ENCODE measurements at regions of chr6 and their contacts with region 1.

Region 1: GRCh38 chr6:150876598-150876997 is 11.1 kb downstream of the MTHFD1L start:
- DNase-seq: no peak
- H3K4me3 Mint-ChIP-seq: no peak overlapping the region
- H3K27ac Mint-ChIP-seq: no peak overlapping the region
- H3K4me1 Mint-ChIP-seq: peaks cover 23% of the 10 kb centered on the region
- H3K27me3 Mint-ChIP-seq: no peaks in the 10 kb centered on the region
- CTCF ChIP-seq: no peak

Region 2: GRCh38 chr6:150409576-150410066 is 467.0 kb before region 1 on chr6:
- CTCF ChIA-PET with region 1: no interaction called
- intact Hi-C with region 1: loop called (anchors 5 kb)
- DNase-seq: peak; percentile 63
- H3K4me3 Mint-ChIP-seq: no peak overlapping the region
- H3K27ac Mint-ChIP-seq: peak overlapping the region; percentile 36
- H3K4me1 Mint-ChIP-seq: peaks cover 44% of the 10 kb centered on the region
- H3K27me3 Mint-ChIP-seq: no peaks in the 10 kb centered on the region
- CTCF ChIP-seq: no peak

Region 3: DNA sequence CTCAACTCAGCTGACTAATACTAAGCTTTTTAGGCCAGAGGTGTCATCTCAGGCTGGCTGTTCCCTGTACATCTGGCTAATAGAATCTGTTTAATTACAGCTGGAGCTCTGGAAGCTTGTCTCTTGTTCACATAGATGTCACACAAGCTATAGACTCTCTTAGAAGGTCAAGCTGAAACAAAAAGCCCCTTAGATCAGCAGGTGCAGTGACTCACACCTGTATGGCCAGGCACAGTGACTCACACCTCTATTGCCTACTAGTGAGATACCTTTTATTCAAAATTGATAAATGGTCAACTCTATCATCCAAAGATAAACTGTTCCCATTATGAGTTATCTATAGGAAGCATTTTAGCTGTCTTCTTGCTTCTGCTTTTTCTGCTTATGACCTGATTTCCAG is 41.0 kb before region 1 on chr6:
- CTCF ChIA-PET with region 1: no interaction called
- intact Hi-C with region 1: loop called (anchors 5 kb)
- DNase-seq: peak; percentile 29
- H3K4me3 Mint-ChIP-seq: no peak overlapping the region
- H3K27ac Mint-ChIP-seq: no peak overlapping the region
- H3K4me1 Mint-ChIP-seq: no peaks in the 10 kb centered on the region
- H3K27me3 Mint-ChIP-seq: no peaks in the 10 kb centered on the region
- CTCF ChIP-seq: no peak

Region 4: DNA sequence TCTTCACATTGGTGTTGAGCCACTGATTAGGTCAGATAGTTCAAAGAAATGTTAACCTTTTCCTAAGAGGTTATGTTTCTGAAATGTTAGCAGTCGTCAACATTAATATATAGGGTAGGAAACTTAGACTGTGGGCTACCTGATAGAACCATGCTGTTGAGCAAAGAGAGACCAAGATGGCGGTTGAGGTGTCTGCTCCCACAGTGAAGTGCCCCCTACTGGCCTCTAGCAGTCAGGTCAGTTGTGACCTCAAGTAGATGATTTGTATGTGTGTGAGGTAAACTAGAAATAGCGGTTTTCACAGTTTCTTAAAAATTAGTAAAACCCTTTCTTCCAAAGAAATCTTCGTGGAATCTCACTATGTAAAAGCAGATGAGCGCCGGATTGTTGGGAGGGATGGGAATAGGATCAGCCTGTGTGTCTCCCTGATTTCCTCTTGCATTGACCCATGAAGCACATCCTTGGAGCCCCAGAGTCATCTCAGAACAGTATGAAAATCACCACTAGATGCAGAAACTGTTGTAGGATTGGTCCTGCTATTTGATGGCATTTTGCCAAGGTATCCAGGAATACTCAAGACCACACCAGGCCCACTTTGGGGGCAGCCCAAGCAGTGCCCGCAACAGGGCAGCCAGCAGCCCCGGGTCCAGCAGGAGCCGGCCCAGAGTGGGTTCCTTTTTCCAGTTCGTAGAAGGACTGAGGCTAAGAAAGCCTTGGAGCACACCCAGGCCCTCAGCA is 29.3 kb after region 1 on chr6:
- CTCF ChIA-PET with region 1: no interaction called
- intact Hi-C with region 1: no loop called
- DNase-seq: no peak
- H3K4me3 Mint-ChIP-seq: no peak overlapping the region
- H3K27ac Mint-ChIP-seq: no peak overlapping the region
- H3K4me1 Mint-ChIP-seq: no peaks in the 10 kb centered on the region
- H3K27me3 Mint-ChIP-seq: no peaks in the 10 kb centered on the region
- CTCF ChIP-seq: no peak

Measured in Calu3 (cell line).